Pancreas (tissue), 10 donors: ENCODE measurements at regions of chr9 and their contacts with region 1.

Region 1: GRCh38 chr9:131709771-131710454 is 30.0 kb downstream of the RAPGEF1 start:
- DNase-seq: no peak
- ATAC-seq: no peak
- H3K4me3 ChIP-seq: no peak overlapping the region
- H3K27ac ChIP-seq: peak overlapping the region in 2 of 4 donors; percentile 10 to 64
- H3K4me1 ChIP-seq: peaks cover 60 to 72% (median 61%) of the 10 kb centered on the region in 3 donors
- H3K27me3 ChIP-seq: no peaks in the 10 kb centered on the region
- CTCF ChIP-seq: no peak

Region 2: DNA sequence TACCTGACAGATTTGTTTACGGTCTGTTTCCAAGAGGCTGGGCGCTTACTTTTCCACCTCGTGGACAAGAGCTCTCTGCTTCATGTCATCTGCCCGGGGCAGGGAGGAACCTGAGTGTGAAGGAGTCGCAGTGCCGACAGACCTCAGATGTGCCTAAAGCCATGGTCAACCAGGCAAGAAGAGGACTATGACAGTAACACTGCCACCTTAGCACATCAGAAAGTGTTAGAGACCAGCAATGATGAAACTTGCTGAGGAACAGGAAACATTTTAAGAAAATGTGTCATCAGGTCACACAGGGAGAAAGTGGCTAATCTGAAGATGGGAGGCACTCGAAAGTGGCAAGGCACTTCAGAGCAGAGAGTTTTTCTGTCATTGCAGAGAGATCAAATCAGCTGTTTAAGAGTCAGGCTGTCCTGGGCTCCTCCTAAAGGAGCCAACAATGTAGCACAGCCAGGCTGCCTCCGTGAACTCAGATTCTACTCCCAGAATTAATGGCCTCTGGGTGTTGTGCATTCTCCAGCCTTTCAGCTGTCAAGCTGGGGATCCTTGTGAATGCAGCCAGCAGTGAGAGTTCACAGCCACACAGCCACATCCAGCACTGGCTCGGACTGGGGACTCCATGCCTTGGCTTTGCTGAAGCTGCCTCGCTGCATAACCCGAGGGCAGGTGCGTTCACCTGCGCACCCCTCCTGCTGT is 64.7 kb before region 1 on chr9:
- intact Hi-C with region 1: loop called in 1 of 3 experiments (anchors 10 kb)
- DNase-seq: no peak
- ATAC-seq: peak in 1 of 4 donors; percentile 9
- H3K4me3 ChIP-seq: no peak overlapping the region
- H3K27ac ChIP-seq: no peak overlapping the region
- H3K4me1 ChIP-seq: no peaks in the 10 kb centered on the region
- H3K27me3 ChIP-seq: no peaks in the 10 kb centered on the region
- CTCF ChIP-seq: no peak